K562 (cell line): ENCODE measurements at regions of chr1 and their contacts with region 1.

Region 1: DNA sequence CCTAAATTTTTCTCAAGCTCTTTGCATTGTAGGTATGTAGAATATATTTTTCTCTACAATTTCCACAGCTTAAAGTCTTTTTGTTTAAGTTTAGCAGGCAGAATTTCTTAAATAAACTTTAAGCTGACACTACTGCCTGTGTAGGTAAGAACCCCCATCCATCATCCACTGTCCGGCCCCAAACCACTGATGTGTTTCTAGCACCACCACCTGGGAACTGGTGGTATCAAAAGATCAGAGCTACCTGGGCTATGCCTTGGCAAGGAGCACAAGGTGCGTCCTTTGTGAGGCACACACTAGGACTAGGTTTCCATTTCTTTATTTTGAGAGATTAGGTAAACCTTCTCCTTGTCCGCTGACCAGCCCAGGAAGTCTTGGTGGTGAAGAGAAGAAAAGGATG is 10.5 kb upstream of the LELP1 start:
- DNase-seq: peak; percentile 39 to 57 (median 46)
- ATAC-seq: peak; percentile 87
- H3K4me3 ChIP-seq: no peak overlapping the region
- H3K27ac ChIP-seq: no peak overlapping the region
- H3K4me1 ChIP-seq: no peaks in the 10 kb centered on the region
- H3K27me3 ChIP-seq: peaks cover 0 to 4% of the 10 kb centered on the region in 2 experiments; a peak in 1 of 5 replicates
- CTCF ChIP-seq: peak; percentile 73 to 80 (median 77)
- EP300 ChIP-seq: no peak
- POLR2A ChIP-seq: no peak
- RAD21 ChIP-seq: peak; percentile 71 to 86

Region 2: DNA sequence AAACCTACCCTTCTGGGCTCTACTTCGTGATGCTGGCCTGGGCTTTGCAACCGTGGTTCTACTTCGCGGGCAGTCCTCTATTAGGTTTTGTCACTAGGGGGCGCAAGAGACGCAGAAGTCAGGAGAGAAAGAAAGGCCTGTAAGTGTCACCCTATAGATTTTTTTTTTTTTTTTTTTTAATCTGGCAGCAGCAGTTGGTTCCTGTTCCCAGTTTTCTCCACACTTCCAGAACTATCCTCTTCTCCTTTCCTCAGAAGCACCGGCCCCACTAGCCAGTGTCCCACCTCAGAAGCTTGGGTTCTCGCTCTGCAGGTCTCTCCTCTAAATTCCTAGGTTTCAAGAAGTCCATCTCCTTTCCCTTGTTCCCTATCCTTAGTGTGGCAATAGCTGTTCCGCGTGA is 538.6 kb before region 1 on chr1:
- CTCF ChIA-PET with region 1: interaction called, 5 read pairs
- POLR2A ChIA-PET with region 1: no interaction called
- in situ Hi-C with region 1: no loop called
- intact Hi-C with region 1: loop called (anchors 10 kb)
- DNase-seq: peak; percentile 65 to 75 (median 70)
- ATAC-seq: peak; percentile 94
- H3K4me3 ChIP-seq: no peak overlapping the region
- H3K27ac ChIP-seq: no peak overlapping the region
- H3K4me1 ChIP-seq: no peaks in the 10 kb centered on the region
- H3K27me3 ChIP-seq: no peaks in the 10 kb centered on the region
- CTCF ChIP-seq: peak; percentile 78 to 83 (median 83)
- EP300 ChIP-seq: no peak
- POLR2A ChIP-seq: no peak
- RAD21 ChIP-seq: peak; percentile 42 to 54

Region 3: DNA sequence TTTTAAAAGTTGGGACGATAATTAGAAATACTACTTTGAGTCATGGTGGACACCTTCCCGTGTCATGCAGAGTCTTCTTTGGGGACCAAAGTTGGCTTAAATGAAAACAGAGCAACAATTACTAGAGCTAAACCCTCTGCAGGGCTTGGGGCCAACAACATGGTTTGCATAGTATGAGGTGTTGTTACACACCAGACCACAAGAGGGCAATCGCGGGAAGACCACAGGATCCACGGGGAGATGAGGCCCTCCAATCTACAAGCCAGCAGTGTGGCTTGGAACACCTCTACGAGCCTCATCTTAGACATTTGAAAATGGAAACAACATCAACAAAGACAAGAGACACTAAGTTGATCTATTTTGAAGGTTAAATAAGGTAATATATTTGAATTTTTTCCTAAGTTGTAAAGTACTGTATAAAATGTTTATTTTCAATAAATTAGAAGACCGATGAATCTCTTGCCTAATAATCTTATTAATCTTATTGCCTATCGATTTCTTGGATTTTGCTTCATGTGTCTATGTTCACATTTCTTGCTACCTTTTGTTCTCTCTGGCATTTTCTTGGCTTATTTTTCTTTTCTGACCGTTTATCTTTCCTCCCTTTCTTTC is 322.8 kb before region 1 on chr1:
- CTCF ChIA-PET with region 1: interaction called, 9 read pairs
- POLR2A ChIA-PET with region 1: interaction called, 3 read pairs
- in situ Hi-C with region 1: loop called (anchors 10 kb)
- intact Hi-C with region 1: loop called (anchors 5 kb)
- DNase-seq: peak; percentile 76 to 81 (median 78)
- ATAC-seq: peak; percentile 94
- H3K4me3 ChIP-seq: no peak overlapping the region
- H3K27ac ChIP-seq: no peak overlapping the region
- H3K4me1 ChIP-seq: no peaks in the 10 kb centered on the region
- H3K27me3 ChIP-seq: no peaks in the 10 kb centered on the region; a peak in 1 of 5 replicates
- CTCF ChIP-seq: peak; percentile 72 to 85 (median 80)
- EP300 ChIP-seq: no peak
- POLR2A ChIP-seq: no peak
- RAD21 ChIP-seq: peak; percentile 59 to 65

Region 4: DNA sequence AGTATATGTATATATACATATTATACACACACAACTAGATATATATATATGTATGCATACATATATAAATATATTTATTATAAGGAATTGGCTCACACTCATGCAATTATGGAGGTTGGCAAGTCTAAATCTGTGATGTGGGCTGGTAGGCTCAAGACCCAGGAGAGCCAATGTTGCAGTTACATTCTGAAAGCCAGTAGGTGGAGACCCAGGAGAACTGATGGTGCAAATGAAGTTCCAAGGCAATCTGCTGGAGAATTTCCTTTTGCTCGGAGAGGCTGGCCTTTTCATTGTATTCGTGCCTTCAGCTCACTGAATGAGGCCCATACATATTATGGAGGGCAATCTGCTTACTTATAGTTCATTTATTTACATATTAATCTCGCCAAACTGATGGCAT is 274.9 kb before region 1 on chr1:
- CTCF ChIA-PET with region 1: interaction called, 3 read pairs
- POLR2A ChIA-PET with region 1: interaction called, 3 read pairs
- in situ Hi-C with region 1: no loop called
- intact Hi-C with region 1: loop called (anchors 1 kb)
- DNase-seq: peak in 2 of 4 experiments; percentile 17 to 33
- ATAC-seq: 0 out of 3 replicates have a peak, but pooled peaks have one; percentile 45
- H3K4me3 ChIP-seq: no peak overlapping the region
- H3K27ac ChIP-seq: no peak overlapping the region
- H3K4me1 ChIP-seq: no peaks in the 10 kb centered on the region
- H3K27me3 ChIP-seq: no peaks in the 10 kb centered on the region
- CTCF ChIP-seq: peak; percentile 44 to 64 (median 62)
- EP300 ChIP-seq: no peak
- POLR2A ChIP-seq: no peak
- RAD21 ChIP-seq: peak; percentile 63 to 73

Region 5: GRCh38 chr1:152960452-152961044 is 232.1 kb before region 1 on chr1:
- CTCF ChIA-PET with region 1: interaction called, 15 read pairs
- POLR2A ChIA-PET with region 1: interaction called, 4 read pairs
- in situ Hi-C with region 1: loop called (anchors 25 kb)
- intact Hi-C with region 1: loop called (anchors 5 kb)
- DNase-seq: peak; percentile 29 to 45 (median 36)
- ATAC-seq: peak; percentile 89
- H3K4me3 ChIP-seq: no peak overlapping the region
- H3K27ac ChIP-seq: no peak overlapping the region
- H3K4me1 ChIP-seq: no peaks in the 10 kb centered on the region
- H3K27me3 ChIP-seq: peaks cover 7 to 24% of the 10 kb centered on the region in 2 experiments; a peak in 4 of 5 replicates
- CTCF ChIP-seq: peak; percentile 68 to 75 (median 70)
- EP300 ChIP-seq: no peak
- POLR2A ChIP-seq: no peak
- RAD21 ChIP-seq: peak; percentile 68 to 82

Region 6: DNA sequence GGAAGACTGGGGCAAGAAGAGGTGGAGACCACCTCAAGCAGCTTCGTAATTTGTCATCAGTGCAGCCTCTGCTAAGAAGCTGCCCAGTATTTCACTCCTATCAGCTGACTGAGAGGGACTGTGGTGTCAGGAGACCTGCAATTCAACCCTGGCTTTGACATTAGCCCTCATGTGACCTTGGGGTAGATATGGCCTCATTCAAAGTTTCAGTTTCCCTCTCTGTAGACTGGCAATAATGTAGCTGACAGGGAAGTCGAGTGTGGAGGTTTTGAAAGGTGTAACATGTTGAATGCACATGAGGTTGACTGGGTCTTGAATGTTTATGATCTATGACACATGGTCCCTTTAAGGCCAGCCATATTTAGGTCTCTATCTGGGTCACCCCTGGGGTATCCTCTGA is 224.4 kb before region 1 on chr1:
- CTCF ChIA-PET with region 1: no interaction called
- POLR2A ChIA-PET with region 1: no interaction called
- in situ Hi-C with region 1: loop called (anchors 25 kb)
- intact Hi-C with region 1: loop called (anchors 5 kb)
- DNase-seq: no peak
- ATAC-seq: no peak
- H3K4me3 ChIP-seq: no peak overlapping the region
- H3K27ac ChIP-seq: no peak overlapping the region
- H3K4me1 ChIP-seq: no peaks in the 10 kb centered on the region
- H3K27me3 ChIP-seq: peaks cover 0 to 8% of the 10 kb centered on the region in 2 experiments; a peak in 3 of 5 replicates
- CTCF ChIP-seq: no peak
- EP300 ChIP-seq: no peak
- POLR2A ChIP-seq: no peak
- RAD21 ChIP-seq: no peak

Region 7: GRCh38 chr1:153238536-153238935 is 45.8 kb after region 1 on chr1:
- CTCF ChIA-PET with region 1: no interaction called
- POLR2A ChIA-PET with region 1: no interaction called
- in situ Hi-C with region 1: no loop called
- intact Hi-C with region 1: no loop called
- DNase-seq: peak in 3 of 4 experiments; percentile 14 to 21 (median 15)
- ATAC-seq: peak; percentile 67; the same call in 2 of the 3 replicates
- H3K4me3 ChIP-seq: no peak overlapping the region
- H3K27ac ChIP-seq: no peak overlapping the region
- H3K4me1 ChIP-seq: no peaks in the 10 kb centered on the region; a peak in 1 of 5 replicates
- H3K27me3 ChIP-seq: peaks cover 0 to 11% of the 10 kb centered on the region in 2 experiments; a peak in 2 of 5 replicates
- CTCF ChIP-seq: peak; percentile 16 to 45 (median 37); a peak in 3 of 6 replicates
- EP300 ChIP-seq: no peak
- POLR2A ChIP-seq: no peak
- RAD21 ChIP-seq: peak in 1 of 2 experiments; percentile 25; a peak in 2 of 4 replicates